ENCODE measurements at regions of chr7 and their contacts with region 1.

Region 1: GRCh38 chr7:12174931-12175330 is 36.2 kb upstream of the TMEM106B start:
- DNase-seq: peak; percentile 73
- ATAC-seq: peak; percentile 64
- H3K4me3 ChIP-seq: no peak overlapping the region
- H3K27ac ChIP-seq: peak overlapping the region; percentile 53
- H3K4me1 ChIP-seq: peaks cover 22% of the 10 kb centered on the region
- H3K27me3 ChIP-seq: no peaks in the 10 kb centered on the region
- CTCF ChIP-seq: no peak

Region 2: GRCh38 chr7:12196386-12196785 is 21.5 kb after region 1 on chr7:
- CTCF ChIA-PET with region 1: no interaction called
- POLR2A ChIA-PET with region 1: no interaction called
- intact Hi-C with region 1: loop called (anchors 2 kb)
- DNase-seq: no peak
- ATAC-seq: no peak
- H3K4me3 ChIP-seq: no peak overlapping the region
- H3K27ac ChIP-seq: no peak overlapping the region
- H3K4me1 ChIP-seq: peaks cover 8% of the 10 kb centered on the region; the same call in 1 of the 2 replicates
- H3K27me3 ChIP-seq: no peaks in the 10 kb centered on the region
- CTCF ChIP-seq: no peak

Measured in PC-3 (cell line).